ENCODE measurements at regions of chr10 and their contacts with region 1.

Region 1: GRCh38 chr10:100487529-100487928 is 24.7 kb downstream of the WNT8B start:
- DNase-seq: no peak

Region 2: GRCh38 chr10:100442530-100442929 is 45.0 kb before region 1 on chr10:
- intact Hi-C with region 1: loop called in 1 of 2 experiments (anchors 1 kb)
- DNase-seq: no peak